Lower leg skin (tissue), 4 donors: ENCODE measurements at regions of chr5 and their contacts with region 1.

Region 1: DNA sequence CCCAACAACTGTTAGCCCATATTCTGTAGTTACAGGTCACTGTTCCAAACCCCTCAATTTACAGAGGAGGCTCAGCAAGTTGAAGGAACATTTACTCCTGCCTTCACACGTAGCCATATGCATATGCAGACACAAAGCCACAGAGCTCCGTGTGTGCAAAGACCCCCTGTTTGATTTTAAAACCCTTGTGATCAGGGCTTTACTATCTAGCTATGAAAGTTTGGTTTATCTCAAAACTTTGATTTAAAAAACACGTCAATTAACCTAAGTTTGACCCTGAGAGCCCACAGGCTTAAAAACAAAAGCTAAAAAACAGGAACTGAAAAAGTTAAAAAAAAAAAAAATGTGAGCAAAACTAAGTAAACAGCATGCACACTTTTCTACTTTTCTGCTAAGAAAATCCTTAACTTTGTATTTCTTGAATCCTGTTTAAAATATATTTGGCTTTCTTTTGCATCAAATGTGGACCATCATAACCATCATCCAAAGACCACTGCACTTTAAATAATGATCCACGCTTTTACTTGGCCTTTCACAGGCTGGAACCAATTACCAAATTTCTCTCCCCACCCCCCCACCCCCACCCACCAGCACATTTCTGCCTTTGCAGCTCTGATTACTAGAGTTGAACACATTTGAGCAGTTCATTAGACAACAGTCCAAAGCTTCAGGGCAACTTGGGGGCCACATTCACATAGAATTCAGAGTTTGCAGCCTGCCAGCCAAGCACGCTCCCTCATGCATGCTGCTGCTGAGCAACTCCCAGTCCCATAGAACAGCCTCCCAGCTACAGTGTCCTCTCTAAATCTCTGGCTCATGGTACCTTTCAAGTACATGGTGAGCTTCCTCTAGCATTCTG is 128.8 kb upstream of the MAP3K1 start:
- DNase-seq: no peak
- H3K4me3 ChIP-seq: no peak overlapping the region
- CTCF ChIP-seq: no peak
- POLR2A ChIP-seq: no peak

Region 2: DNA sequence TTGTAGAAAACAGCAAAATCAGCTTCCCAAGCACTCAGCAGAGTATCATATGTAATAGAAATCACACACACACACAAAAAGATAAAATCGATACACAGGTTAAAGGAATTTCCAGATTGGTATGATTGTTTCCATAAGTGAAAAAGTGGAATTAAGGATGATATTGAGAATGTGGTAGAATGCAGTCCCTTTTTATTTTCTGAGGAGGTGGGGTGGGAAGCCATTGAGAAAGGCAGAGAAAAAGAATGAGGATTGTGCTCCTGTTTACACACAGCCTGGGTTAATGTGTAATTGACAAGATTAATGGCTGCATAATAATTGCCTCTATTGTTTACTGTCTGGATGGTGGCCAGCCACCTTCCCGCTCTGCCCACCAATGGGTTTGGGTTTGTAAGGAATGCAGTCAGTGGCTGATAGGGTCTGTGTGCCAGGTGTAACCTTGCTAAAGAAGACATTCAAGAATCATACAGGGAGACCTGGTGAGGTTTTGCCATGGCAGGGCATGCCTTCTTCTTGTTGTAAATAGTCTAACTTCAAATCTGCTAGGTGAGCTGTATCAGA is 48.4 kb before region 1 on chr5:
- intact Hi-C with region 1: loop called (anchors 2 kb)
- DNase-seq: peak in 1 of 2 donors; percentile 42
- H3K4me3 ChIP-seq: no peak overlapping the region
- CTCF ChIP-seq: no peak
- POLR2A ChIP-seq: no peak